H1 (cell line): ENCODE measurements at regions of chr13 and their contacts with region 1.

Region 1: DNA sequence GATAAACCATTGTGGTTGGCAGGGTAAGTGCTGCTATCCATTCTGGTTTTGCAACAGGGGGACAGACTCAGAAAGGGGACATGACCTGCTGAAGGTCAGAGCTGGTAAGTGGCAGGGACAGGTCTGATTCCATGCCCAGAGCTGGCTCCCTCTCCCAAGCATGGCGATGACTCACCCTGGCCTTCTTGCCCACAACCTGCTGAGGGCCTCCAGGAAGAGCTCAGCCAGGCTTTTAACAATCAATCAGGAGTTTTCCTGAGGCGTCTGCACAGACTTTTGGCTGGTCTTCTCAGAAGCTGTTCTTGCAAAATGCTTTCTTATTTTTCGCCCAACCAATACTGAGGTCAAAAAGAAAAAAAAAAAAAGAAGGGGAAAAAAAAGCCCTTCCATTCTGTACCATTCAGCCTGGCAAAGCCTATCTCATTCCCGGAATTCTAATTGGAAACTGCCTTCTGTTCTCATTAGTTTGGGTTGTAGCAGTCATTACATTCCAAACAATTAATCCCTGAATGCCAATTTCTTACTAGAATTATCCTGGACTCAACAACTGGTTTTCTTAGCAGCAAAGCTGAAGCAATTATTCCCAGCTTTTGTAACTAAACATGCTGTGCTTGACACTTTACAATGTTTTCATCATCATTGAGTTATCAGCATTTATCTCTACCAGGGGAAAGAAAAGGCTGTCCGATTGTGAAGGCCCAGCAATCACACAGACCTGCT is 17.7 kb downstream of the SIAH3 start:
- DNase-seq: peak in 1 of 2 experiments; percentile 19
- H3K4me3 ChIP-seq: no peak overlapping the region
- H3K27ac ChIP-seq: no peak overlapping the region
- H3K4me1 ChIP-seq: peaks cover 3 to 8% (median 6%) of the 10 kb centered on the region in 4 experiments; a peak in 5 of 7 replicates
- H3K27me3 ChIP-seq: no peaks in the 10 kb centered on the region
- CTCF ChIP-seq: no peak
- EP300 ChIP-seq: no peak
- POLR2A ChIP-seq: no peak
- RAD21 ChIP-seq: no peak

Region 2: DNA sequence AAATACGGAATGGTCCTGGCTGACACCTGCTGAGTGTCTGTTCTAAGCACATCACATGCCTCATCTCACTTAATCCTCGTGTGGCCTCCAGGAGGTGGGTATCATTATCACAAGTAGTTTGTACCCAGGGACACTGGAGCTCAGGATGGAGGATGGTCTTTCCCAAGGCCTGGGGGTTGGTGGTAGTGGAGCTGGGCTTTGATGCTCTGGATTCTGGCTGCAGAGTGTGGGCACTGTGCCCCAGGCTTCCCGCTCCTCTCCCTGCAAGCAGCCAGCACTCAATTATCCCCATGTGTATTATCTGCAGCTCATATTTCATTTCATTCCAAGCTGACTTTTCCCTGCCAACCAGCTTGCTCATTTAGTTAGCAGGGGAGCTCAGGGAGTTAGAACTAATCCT is 34.4 kb before region 1 on chr13:
- CTCF ChIA-PET with region 1: no interaction called
- POLR2A ChIA-PET with region 1: no interaction called
- DNase-seq: no peak
- H3K4me3 ChIP-seq: no peak overlapping the region
- H3K27ac ChIP-seq: no peak overlapping the region
- H3K4me1 ChIP-seq: 0 out of 7 replicates have a peak, but pooled peaks cover 0 to 3% (median 0%) of the 10 kb centered on the region in 4 experiments
- H3K27me3 ChIP-seq: no peaks in the 10 kb centered on the region
- CTCF ChIP-seq: no peak
- EP300 ChIP-seq: no peak
- POLR2A ChIP-seq: no peak
- RAD21 ChIP-seq: no peak

Region 3: DNA sequence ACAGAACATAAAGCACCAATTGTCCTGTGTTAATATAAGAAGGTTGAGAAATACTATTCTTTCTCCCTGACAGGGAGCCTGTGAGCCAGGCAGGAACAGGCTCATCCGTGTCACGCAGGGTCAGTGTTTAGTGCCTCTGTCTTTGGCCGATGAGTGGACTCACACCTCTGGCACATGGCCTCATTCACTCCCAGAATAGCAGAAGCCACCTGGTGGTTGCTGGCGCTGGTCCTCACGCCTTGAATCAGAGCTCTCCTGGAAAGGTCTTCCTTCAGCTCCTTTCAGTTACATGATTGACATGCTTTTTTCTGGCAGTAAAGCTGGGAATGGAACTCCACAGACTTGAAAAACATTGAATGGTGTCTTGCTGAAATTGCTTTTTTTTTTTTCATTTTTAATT is 45.9 kb after region 1 on chr13:
- CTCF ChIA-PET with region 1: interaction called, 11 read pairs
- POLR2A ChIA-PET with region 1: no interaction called
- DNase-seq: peak in 1 of 2 experiments; percentile 57
- H3K4me3 ChIP-seq: no peak overlapping the region
- H3K27ac ChIP-seq: no peak overlapping the region
- H3K4me1 ChIP-seq: peaks cover 0 to 6% (median 3%) of the 10 kb centered on the region in 4 experiments; a peak in 2 of 7 replicates
- H3K27me3 ChIP-seq: peaks cover 2 to 18% (median 7%) of the 10 kb centered on the region in 4 experiments; a peak in 5 of 7 replicates
- CTCF ChIP-seq: peak; percentile 42 to 71 (median 60)
- EP300 ChIP-seq: no peak
- POLR2A ChIP-seq: no peak
- RAD21 ChIP-seq: peak; percentile 49 to 62